Psoas muscle (tissue), 8 donors: ENCODE measurements at regions of chr16 and their contacts with region 1.

Region 1: GRCh38 chr16:29805378-29806098 is 791 bp upstream of the MAZ start:
- DNase-seq: peak; percentile 98 to 99
- ATAC-seq: peak; percentile 88 to 90 (median 90)
- H3K4me3 ChIP-seq: peak overlapping the region; percentile 80
- H3K27ac ChIP-seq: peak overlapping the region; percentile 97
- H3K4me1 ChIP-seq: peaks cover 44% of the 10 kb centered on the region
- H3K27me3 ChIP-seq: no peaks in the 10 kb centered on the region
- CTCF ChIP-seq: no peak

Region 2: GRCh38 chr16:29848420-29849297 is 43.1 kb after region 1 on chr16:
- intact Hi-C with region 1: loop called in 1 of 2 experiments (anchors 1 kb)
- DNase-seq: peak; percentile 80 to 91
- ATAC-seq: peak; percentile 79 to 90 (median 84)
- H3K4me3 ChIP-seq: no peak overlapping the region
- H3K27ac ChIP-seq: no peak overlapping the region
- H3K4me1 ChIP-seq: no peaks in the 10 kb centered on the region
- H3K27me3 ChIP-seq: no peaks in the 10 kb centered on the region
- CTCF ChIP-seq: peak; percentile 86